ENCODE measurements at regions of chr5 and their contacts with region 1.

Region 1: DNA sequence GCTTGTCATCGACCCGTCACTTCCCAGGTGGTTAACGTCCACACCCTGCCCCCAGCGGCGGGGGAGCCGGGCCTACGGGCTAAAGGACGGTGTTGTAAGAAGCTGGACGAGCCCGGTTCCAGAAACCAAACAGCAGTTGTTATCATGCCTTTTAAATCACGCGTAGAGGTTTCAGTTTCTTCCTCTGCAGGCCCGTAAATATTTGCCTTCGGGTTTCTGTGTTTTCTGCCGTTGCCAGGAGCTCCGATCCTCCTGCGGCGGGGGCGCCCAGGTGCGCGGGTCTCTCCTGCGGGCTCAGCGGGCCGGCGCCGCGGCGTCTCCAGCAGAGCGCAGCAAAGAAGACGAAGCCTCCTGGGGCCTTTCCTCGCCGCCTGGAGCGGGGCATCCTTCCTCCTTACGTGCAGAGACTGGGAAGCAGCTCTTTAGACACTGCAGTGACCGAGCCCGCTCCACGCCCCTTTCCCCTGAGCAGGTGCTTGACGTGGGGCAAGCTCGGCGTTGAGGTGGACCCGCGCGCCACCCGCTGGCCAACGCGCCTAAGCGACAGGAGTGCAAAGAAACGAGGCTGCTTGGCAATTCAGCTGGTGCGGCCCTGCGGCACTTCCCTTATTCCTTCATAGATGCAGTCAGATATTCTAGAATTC is 21.8 kb upstream of the TTC1 start:
- DNase-seq: peak; percentile 72 to 87
- H3K4me3 ChIP-seq: peak overlapping the region; percentile 20
- H3K4me1 ChIP-seq: 0 out of 2 replicates have a peak, but pooled peaks cover 2% of the 10 kb centered on the region
- H3K27me3 ChIP-seq: peaks cover 21% of the 10 kb centered on the region

Region 2: DNA sequence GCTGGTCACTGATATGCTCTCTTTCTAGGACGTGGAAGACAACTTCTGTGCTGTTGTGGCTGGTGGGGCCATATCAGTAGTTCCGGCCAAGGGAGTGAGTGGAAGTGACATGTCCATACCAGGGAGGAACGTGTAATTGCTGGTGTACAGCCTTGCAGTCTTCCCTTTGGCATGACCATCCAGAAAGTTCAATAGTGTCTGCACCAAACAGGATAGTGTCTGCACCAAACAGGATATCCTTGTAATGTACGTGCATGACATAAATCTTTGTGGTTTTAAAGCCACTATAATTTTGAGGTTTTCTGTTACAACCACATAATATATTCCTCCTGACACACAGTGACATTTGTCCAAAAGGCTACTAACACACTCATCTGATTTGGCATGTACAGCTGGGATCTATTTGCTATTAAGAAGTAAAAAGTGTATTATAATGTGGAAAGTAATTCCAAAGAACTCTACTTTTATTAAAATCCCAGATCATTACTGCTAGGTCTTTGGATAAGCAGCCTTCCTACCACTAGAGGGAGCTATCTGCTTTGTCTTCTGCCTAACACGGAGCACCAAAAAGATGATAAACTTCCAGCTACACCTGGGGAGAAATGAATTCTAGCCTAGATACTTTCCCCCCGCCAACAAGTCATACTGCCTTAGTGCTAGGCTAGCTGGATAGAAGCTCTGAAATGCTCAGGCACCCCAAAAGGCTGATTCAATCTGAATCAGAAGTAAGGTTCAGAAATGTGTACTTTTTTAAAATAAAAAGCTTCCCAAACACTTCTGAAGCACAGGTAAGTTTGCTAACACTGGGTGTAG is 830.5 kb before region 1 on chr5:
- in situ Hi-C with region 1: loop called (anchors 25 kb)
- DNase-seq: peak; percentile 57 to 65
- H3K4me3 ChIP-seq: no peak overlapping the region
- H3K4me1 ChIP-seq: no peaks in the 10 kb centered on the region
- H3K27me3 ChIP-seq: no peaks in the 10 kb centered on the region

Region 3: GRCh38 chr5:159286420-159287035 is 700.6 kb before region 1 on chr5:
- in situ Hi-C with region 1: loop called (anchors 25 kb)
- DNase-seq: peak in 1 of 2 experiments; percentile 23
- H3K4me3 ChIP-seq: no peak overlapping the region
- H3K4me1 ChIP-seq: no peaks in the 10 kb centered on the region
- H3K27me3 ChIP-seq: no peaks in the 10 kb centered on the region

Region 4: DNA sequence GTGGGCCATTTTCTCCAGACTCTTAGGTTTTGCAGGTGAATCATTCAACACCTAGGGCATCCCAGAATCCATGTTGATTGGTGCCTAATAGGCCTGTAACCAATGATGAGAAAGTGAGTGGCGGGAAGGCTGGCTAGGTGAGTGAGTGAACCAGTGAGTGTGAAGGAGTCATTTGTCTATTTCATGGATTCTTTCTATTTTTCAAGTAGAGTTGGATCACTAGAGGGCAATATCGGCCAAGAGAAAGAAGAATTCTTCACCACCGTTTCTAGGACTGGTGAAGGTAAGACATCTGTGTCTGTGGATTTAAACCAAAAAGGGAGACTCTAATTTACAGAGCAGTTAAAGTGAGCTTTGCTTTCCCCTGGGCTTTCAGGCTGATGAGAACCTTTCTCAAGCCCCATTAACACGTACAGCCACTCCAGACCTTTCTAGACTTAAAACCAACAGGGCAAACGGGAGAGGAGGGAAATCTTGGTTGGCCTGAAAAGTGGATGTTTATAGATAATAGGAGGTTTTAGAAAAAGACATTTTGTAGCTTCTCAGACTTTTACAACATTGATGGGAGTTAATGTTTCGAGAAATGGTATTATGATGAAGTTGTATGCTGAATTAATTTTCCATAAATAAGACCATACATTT is 542.6 kb before region 1 on chr5:
- in situ Hi-C with region 1: loop called (anchors 10 kb)
- DNase-seq: peak in 1 of 2 experiments; percentile 43
- H3K4me3 ChIP-seq: no peak overlapping the region
- H3K4me1 ChIP-seq: no peaks in the 10 kb centered on the region
- H3K27me3 ChIP-seq: 0 out of 2 replicates have a peak, but pooled peaks cover 3% of the 10 kb centered on the region

Region 5: DNA sequence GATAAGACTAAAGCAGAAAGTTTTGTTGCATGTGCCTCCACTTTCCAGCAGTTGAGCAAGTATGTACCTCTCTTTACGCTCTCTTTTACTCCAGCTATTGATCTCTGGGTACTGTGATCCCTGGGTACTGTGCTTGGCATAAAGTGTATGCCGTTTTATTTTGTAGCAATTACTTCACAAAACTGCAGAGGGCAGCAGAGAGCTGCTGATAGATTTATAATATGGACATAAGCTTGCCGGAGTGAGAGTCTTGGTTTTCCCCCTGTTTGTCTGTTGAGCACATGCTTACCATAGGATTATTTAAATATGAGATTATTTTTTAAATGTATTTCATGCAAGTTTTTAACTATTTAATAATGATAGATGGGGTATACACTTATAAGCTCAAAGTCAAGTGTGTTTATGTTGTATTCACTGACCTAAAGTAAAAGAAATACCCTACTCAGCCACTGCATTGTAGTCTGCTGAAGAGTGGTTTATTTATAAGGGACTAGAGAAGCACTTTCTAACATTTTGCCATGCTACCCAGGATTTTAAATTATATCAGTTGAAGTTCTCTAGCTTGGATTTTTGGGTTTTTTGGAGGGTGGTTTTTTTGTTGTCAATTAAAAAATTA is 34.8 kb after region 1 on chr5:
- in situ Hi-C with region 1: no loop called
- DNase-seq: peak; percentile 65 to 71
- H3K4me3 ChIP-seq: no peak overlapping the region
- H3K4me1 ChIP-seq: peaks cover 7% of the 10 kb centered on the region
- H3K27me3 ChIP-seq: no peaks in the 10 kb centered on the region